Right ventricle myocardium inferior (tissue), 1 donor: ENCODE measurements at regions of chr14 and their contacts with region 1.

Region 1: GRCh38 chr14:23269193-23269592 is 16.7 kb downstream of the HOMEZ start:
- DNase-seq: no peak
- ATAC-seq: no peak

Region 2: DNA sequence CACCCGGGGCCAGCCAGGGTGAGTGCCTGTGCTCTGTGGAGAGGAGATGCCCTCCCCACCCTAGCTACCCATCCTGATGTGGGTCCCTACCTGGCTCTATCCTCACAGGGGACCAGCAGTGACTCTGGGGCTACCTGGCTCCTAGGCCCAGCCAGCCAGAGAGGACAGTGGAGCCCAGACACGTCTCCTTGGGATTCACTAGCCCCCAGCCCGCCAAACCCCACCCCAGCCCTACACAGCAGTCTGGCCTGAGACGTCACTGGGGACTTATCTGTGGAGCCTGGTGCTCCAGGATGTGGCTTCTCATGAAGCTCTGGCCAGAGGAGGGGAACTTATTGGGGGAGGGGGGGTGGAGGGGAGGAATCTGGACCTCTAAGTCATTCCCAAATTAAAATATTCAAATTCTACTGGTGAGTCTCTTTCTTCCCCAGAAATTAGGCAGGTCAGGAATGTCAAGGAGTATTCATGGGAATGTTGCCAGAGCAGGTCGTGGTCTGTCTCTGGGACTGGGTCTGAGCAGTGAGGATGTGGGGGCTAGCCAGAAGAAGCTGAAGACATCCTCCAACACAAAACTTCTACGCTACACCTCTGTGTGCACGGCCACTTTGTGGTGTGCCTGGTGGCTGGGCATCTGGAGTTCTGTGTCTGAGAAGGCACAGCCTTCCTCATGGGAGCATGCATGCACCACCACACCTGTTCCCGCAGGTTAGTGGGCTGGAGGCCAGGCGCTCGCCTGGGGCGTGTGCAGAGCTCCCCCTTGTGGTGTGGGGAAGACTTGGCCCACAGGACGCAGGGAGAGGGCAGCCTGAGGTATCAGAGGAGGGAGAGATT is 110.4 kb after region 1 on chr14:
- intact Hi-C with region 1: loop called (anchors 5 kb)
- DNase-seq: peak; percentile 84
- ATAC-seq: peak; percentile 46

Region 3: DNA sequence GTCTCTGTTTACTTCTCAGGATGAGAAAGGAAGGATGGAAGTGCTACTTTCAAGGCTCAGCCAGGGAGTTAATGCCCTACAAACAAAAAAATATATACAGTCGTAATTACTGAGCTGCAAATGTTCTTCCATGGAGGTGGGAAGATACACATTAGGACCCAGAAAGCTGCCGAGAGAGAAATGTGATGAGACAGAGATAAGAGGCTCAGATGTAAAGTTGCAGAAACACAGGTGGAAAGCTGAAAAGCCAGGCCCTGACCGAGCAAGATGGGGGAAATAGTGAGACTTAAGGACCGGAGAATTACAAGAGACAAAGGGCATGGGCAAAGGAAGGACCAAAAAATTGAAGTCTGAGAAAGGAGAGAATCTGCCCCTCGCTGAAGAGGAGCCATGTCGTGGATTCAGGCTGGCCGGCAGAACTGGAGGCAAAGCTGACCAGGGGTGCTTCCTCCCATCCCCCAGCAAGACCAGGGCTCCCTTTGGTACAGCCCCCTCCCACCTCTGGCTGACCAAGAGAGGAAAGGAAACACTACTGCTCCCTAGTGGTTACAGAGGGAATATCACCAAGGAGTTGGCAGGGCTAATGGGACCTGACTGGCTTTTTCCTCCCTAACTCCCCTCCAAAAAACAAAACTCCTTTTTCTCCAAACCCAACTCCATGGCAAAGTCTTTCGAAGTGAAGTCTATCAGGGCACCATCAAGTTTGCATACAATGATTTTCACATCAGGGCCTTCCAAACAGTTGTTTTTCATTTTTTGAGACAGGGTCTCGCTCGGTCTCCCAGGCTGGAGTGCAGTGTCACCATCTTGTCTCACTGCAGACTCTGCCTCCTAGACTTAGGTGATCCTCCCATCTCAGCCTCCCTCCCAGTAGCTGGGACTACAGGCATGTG is 270.3 kb after region 1 on chr14:
- intact Hi-C with region 1: no loop called
- DNase-seq: no peak
- ATAC-seq: no peak

Region 4: GRCh38 chr14:23567192-23568020 is 298.2 kb after region 1 on chr14 and contains the start of gene AP1G2:
- intact Hi-C with region 1: loop called (anchors 10 kb)
- DNase-seq: peak; percentile 95
- ATAC-seq: peak; percentile 76
- total RNA-seq, gene AP1G2: 15.5 TPM